ENCODE measurements at regions of chr12 and their contacts with region 1.

Region 1: GRCh38 chr12:3988519-3989448 is 115.6 kb upstream of the PARP11 start:
- DNase-seq: peak; percentile 60
- ATAC-seq: peak; percentile 71
- H3K4me3 Mint-ChIP-seq: peak overlapping the region; percentile 11
- H3K27ac Mint-ChIP-seq: peak overlapping the region; percentile 76
- H3K4me1 Mint-ChIP-seq: peaks cover 35% of the 10 kb centered on the region
- H3K27me3 Mint-ChIP-seq: no peaks in the 10 kb centered on the region

Region 2: GRCh38 chr12:3973978-3974644 is 14.7 kb before region 1 on chr12:
- CTCF ChIA-PET with region 1: interaction called, 16 read pairs
- POLR2A ChIA-PET with region 1: interaction called, 3 read pairs
- intact Hi-C with region 1: loop called in 1 of 2 experiments (anchors 2 kb)
- DNase-seq: peak; percentile 40
- ATAC-seq: peak; percentile 69
- H3K4me3 Mint-ChIP-seq: peak overlapping the region; percentile 25
- H3K27ac Mint-ChIP-seq: peak overlapping the region; percentile 76
- H3K4me1 Mint-ChIP-seq: peaks cover 66% of the 10 kb centered on the region
- H3K27me3 Mint-ChIP-seq: no peaks in the 10 kb centered on the region

Measured in activated CD4-positive, alpha-beta T cell treated with anti-CD3 and anti-CD28 coated beads for 36 hours (primary cell).